ENCODE measurements at regions of chr1 and their contacts with region 1.

Region 1: GRCh38 chr1:43763497-43763973 is 56.2 kb downstream of the ST3GAL3 start:
- DNase-seq: peak; percentile 31 to 49 (median 40)
- H3K4me3 ChIP-seq: no peak overlapping the region
- H3K4me3 Mint-ChIP-seq: no peak overlapping the region
- H3K27ac ChIP-seq: no peak overlapping the region
- H3K27ac Mint-ChIP-seq: no peak overlapping the region
- H3K4me1 ChIP-seq: no peaks in the 10 kb centered on the region
- H3K4me1 Mint-ChIP-seq: peaks cover 0 to 9% (median 3%) of the 10 kb centered on the region in 4 donors
- H3K27me3 ChIP-seq: no peaks in the 10 kb centered on the region
- H3K27me3 Mint-ChIP-seq: no peaks in the 10 kb centered on the region

Region 2: GRCh38 chr1:43529206-43529731 is 234.3 kb before region 1 on chr1:
- CTCF ChIA-PET with region 1: interaction called, 3 read pairs
- POLR2A ChIA-PET with region 1: no interaction called
- intact Hi-C with region 1: loop called (anchors 1 kb)
- DNase-seq: peak; percentile 70 to 76 (median 73)
- H3K4me3 ChIP-seq: no peak overlapping the region
- H3K4me3 Mint-ChIP-seq: peak overlapping the region in 7 of 8 donors; percentile 19 to 84 (median 51)
- H3K27ac ChIP-seq: no peak overlapping the region
- H3K27ac Mint-ChIP-seq: peak overlapping the region in 1 of 7 donors; percentile 74
- H3K4me1 ChIP-seq: peaks cover 21% of the 10 kb centered on the region
- H3K4me1 Mint-ChIP-seq: peaks cover 15 to 31% (median 19%) of the 10 kb centered on the region in 4 donors
- H3K27me3 ChIP-seq: peaks cover 13% of the 10 kb centered on the region
- H3K27me3 Mint-ChIP-seq: peaks cover 39 to 63% of the 10 kb centered on the region in 2 donors

Region 3: GRCh38 chr1:43753422-43753821 is 10.1 kb before region 1 on chr1:
- CTCF ChIA-PET with region 1: interaction called, 11 read pairs
- POLR2A ChIA-PET with region 1: no interaction called
- intact Hi-C with region 1: no loop called
- DNase-seq: no peak
- H3K4me3 ChIP-seq: no peak overlapping the region
- H3K4me3 Mint-ChIP-seq: no peak overlapping the region
- H3K27ac ChIP-seq: no peak overlapping the region
- H3K27ac Mint-ChIP-seq: no peak overlapping the region
- H3K4me1 ChIP-seq: no peaks in the 10 kb centered on the region
- H3K4me1 Mint-ChIP-seq: no peaks in the 10 kb centered on the region
- H3K27me3 ChIP-seq: no peaks in the 10 kb centered on the region
- H3K27me3 Mint-ChIP-seq: no peaks in the 10 kb centered on the region

Region 4: DNA sequence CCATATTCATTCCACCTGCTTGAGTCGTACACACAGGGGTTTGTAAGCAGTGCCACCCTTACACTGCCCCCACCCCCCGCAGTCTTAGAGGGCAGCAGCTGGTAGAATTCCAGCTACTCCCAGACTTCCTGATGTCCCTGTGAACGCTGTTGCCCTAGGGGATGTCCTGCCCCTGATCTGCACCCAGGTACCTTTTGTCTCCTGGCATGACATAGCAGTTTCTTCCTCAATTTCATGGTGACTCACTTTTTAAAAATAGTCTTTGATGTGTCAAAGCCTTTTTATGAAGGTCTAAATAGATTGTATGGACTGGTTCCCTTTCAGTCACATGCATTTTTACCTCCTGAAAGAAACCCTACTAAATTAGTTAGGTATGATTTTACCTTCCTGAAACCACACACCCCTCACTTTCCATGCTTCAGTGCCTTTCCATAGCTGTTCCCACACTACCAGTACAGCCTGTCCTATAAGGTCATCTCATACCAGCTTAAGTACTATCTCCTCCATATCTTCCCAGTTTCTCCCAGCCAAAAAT is 20.2 kb after region 1 on chr1:
- CTCF ChIA-PET with region 1: interaction called, 11 read pairs
- POLR2A ChIA-PET with region 1: no interaction called
- intact Hi-C with region 1: no loop called
- DNase-seq: no peak
- H3K4me3 ChIP-seq: no peak overlapping the region
- H3K4me3 Mint-ChIP-seq: no peak overlapping the region
- H3K27ac ChIP-seq: no peak overlapping the region
- H3K27ac Mint-ChIP-seq: peak overlapping the region in 1 of 7 donors; percentile 20
- H3K4me1 ChIP-seq: no peaks in the 10 kb centered on the region
- H3K4me1 Mint-ChIP-seq: peaks cover 0 to 12% (median 0%) of the 10 kb centered on the region in 4 donors
- H3K27me3 ChIP-seq: no peaks in the 10 kb centered on the region
- H3K27me3 Mint-ChIP-seq: no peaks in the 10 kb centered on the region

Region 5: DNA sequence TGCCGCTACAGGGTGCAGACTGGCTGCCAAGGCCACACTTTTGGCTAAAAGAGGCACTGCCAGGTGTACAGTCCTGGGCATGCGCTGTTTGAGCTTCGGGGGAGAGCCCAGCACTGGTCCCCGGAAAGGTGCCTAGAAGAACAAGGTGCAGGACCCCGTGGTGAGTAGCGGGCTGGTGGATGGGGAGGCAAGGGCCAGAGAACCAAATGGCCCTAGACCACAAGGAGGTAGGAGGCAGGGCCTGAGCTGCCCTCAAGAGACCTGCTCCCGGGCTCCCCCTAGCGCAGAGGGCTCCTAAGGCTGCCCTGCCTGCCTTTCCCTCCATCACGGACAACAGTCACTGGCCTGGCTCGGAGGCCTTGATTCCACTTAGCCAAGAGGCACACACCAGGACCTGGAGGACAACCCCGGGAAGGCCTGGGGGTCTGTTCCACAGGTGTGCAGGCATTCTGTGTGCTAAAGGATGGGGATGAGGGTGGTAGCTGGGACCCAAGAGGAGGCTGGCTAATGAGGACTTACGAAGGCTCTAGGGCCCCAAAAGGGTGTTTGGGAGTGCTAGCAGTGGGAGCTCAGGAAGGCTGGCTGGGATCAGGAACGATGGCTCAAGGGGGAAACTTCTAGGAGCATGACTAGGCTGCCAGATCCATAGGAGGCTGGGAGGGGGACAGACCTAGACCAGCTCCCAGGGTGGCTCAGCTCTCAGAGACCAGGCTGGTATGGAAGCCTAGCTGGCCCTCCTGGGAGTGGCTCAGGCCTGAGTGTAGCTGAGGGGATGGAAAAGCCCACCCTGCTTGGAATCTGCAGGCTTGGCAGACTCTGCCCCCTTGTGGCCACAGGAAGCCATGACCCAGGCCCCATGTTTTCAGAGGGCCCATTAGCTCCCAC is 170.8 kb after region 1 on chr1:
- CTCF ChIA-PET with region 1: interaction called, 91 read pairs
- POLR2A ChIA-PET with region 1: no interaction called
- intact Hi-C with region 1: no loop called
- DNase-seq: peak in 4 of 5 donors; percentile 23 to 35 (median 32)
- H3K4me3 ChIP-seq: no peak overlapping the region
- H3K4me3 Mint-ChIP-seq: peak overlapping the region in 4 of 8 donors; percentile 0 to 56 (median 34)
- H3K27ac ChIP-seq: no peak overlapping the region
- H3K27ac Mint-ChIP-seq: peak overlapping the region in 2 of 7 donors; percentile 43 to 56
- H3K4me1 ChIP-seq: peaks cover 8% of the 10 kb centered on the region
- H3K4me1 Mint-ChIP-seq: peaks cover 3 to 25% (median 4%) of the 10 kb centered on the region in 4 donors
- H3K27me3 ChIP-seq: peaks cover 23% of the 10 kb centered on the region
- H3K27me3 Mint-ChIP-seq: peaks cover 16 to 21% of the 10 kb centered on the region in 2 donors

Region 6: DNA sequence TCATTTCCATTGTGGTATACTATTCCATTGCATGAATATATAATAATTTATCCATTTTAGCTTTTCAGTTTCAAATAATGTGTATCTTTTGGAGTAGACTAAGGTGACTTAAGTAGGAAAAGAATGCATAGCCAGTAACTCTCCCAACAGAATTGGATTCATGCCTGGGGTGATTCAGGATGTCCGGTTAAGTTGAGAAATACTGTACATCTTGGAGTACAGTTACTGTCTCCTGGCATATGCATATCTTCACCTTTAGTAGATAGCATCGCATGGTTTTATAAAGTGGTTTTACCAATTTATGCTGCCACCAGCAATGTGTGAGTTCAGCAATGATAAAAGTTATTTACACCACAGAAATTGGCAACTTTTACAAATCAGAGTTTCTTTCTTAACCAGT is 286.3 kb after region 1 on chr1:
- CTCF ChIA-PET with region 1: interaction called, 18 read pairs
- POLR2A ChIA-PET with region 1: no interaction called
- intact Hi-C with region 1: no loop called
- DNase-seq: no peak
- H3K4me3 ChIP-seq: no peak overlapping the region
- H3K4me3 Mint-ChIP-seq: no peak overlapping the region
- H3K27ac ChIP-seq: no peak overlapping the region
- H3K27ac Mint-ChIP-seq: no peak overlapping the region
- H3K4me1 ChIP-seq: no peaks in the 10 kb centered on the region
- H3K4me1 Mint-ChIP-seq: peaks cover 0 to 5% (median 3%) of the 10 kb centered on the region in 4 donors
- H3K27me3 ChIP-seq: no peaks in the 10 kb centered on the region
- H3K27me3 Mint-ChIP-seq: peaks cover 12 to 13% of the 10 kb centered on the region in 2 donors